HCT116 (cell line): ENCODE measurements at regions of chr6 and their contacts with region 1.

Region 1: DNA sequence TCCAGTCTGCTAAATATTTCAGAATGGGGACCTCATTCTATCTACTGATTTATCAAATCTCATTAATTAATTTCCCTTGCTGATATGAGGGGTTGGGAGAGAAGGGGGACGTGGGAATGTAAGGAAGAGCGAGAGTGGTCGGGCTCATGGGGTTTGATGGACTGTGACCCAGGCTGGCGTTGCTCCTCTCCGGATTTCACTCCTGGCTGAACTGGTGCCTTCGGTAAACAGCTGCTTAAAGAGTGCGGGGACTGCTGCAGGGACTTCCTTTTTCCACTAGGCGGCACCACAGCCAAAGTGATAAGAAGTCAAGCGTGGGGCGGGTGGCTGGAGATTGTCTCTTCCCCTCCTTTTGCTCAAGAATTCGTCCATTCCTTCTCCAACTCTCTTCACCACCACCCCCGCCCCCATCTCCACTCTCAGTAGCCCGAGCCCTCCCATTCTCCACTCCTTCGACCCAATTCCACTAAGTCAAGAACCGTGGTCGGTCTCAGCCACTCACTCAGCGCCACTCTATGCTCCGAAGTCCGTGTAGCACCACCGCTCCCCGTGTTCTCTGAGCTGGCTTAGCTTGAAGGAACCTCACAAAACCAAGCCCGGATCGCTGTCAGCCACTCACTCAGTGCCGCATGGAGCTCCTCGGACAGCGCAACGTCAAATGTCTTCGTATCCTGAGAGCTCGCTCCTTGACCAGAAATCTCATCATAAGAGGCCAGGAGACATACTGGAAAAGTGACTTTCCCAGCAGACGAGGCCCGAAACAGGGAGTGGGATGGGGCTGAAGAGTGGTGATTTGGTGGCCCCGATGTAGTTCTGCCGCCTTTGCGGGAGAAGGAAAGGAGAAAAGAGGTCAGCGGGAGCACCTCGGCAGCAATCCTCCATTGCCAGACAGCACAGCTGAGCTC is 9.7 kb downstream of the TRIM31 start:
- DNase-seq: peak; percentile 74
- ATAC-seq: peak; percentile 59
- H3K4me3 ChIP-seq: peak overlapping the region in 1 of 2 experiments; percentile 56; a peak in 1 of 4 replicates
- H3K27ac ChIP-seq: no peak overlapping the region
- H3K4me1 ChIP-seq: peaks cover 17 to 42% of the 10 kb centered on the region in 2 experiments
- H3K27me3 ChIP-seq: no peaks in the 10 kb centered on the region
- CTCF ChIP-seq: peak; percentile 86 to 96 (median 91)
- POLR2A ChIP-seq: no peak
- RAD21 ChIP-seq: peak; percentile 95

Region 2: DNA sequence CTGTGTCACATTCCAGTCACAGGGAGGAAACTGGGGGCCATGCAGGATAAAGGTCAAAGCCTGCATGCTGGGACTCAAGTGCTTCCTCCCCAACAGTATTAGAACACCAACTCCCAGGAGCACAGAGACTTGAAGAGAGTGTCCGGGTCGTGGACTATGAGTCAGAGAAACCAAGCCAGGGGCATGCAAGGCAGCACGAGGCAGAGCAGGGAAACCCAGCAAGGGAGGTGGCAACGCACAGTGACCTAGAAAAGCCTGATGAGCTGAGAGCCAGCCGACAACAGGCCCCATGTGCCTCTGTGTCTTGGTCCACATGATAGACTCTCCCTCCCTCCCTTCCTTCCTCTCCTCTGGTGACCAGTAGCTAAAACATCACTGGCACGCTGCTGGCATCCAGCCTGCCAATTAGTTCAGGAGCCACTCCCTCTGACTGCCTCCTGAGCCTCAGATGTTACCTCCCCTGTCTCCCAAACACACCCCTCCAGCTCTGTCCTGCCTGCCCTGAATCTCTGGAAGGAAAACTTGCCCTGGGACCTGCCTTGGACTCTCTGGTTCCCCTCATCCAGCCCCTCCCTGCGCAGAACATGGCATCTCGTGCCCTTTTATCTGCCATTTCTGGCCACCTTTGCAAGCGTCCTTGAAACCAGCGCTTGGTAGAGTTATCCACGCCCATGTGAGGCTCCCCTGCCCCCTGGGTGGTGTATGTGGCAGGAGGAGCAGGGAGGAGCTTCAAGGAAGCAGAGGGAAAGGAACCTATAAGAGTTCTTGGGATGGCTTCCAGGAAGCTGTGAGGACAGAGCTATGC is 11.4 kb before region 1 on chr6:
- CTCF ChIA-PET with region 1: interaction called, 8 read pairs
- POLR2A ChIA-PET with region 1: interaction called, 18 read pairs
- RAD21 ChIA-PET with region 1: interaction called in 1 of 2 experiments, 3 read pairs
- intact Hi-C with region 1: no loop called
- DNase-seq: peak; percentile 85
- ATAC-seq: peak; percentile 93
- H3K4me3 ChIP-seq: peak overlapping the region; percentile 15 to 52; a peak in 3 of 4 replicates
- H3K27ac ChIP-seq: peak overlapping the region; percentile 71
- H3K4me1 ChIP-seq: peaks cover 17 to 38% of the 10 kb centered on the region in 2 experiments
- H3K27me3 ChIP-seq: no peaks in the 10 kb centered on the region
- CTCF ChIP-seq: no peak
- POLR2A ChIP-seq: peak; percentile 28
- RAD21 ChIP-seq: no peak

Region 3: DNA sequence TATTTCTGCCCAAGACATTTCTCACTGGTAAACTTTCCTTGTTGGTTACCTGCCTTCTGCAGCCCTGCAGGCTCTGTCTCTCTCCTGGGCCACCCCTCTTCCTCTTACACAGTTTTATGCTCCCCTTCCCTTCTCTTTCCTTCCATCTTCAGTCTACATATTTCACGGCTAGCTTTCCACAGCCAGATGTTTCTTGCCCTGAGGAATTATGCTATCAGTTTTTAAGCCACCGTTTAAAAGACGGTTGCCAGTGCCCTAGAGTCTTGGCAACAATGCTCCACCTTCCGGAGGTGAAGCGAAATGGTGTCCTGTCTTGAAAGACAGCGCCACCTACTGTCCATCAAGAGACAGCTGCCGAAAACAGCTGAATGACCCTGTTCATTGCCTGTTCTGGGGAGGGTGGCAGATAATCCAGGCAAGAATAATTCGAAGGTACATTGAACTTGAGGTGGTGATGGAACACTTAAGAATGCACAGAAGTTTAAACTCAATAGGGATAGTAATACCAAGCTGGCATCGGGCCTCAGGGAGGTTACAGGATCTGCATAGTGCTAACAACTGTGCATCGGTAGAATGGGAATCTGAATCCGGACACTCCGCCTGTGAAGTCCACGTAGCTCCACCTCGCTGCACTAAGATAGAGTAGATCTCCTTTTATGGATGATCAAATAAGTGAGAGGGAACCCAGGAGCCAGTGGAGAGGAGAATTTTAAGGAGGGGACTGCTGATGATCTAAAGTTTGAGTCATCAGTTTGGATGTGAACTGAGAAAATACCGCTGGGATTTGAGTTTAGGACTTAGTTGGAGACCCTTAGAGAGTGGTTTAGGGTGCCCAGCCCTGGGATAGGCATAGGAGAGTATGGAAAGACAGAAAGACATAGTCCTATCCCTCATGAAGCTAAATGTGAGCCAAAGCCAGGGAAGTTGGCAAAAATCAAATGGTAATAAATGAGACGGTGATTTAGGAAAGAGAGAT is 28.0 kb after region 1 on chr6:
- CTCF ChIA-PET with region 1: interaction called, 105 read pairs
- POLR2A ChIA-PET with region 1: interaction called, 4 read pairs
- RAD21 ChIA-PET with region 1: interaction called, 4 to 6 read pairs
- intact Hi-C with region 1: loop called (anchors 1 kb)
- DNase-seq: peak; percentile 76
- ATAC-seq: peak; percentile 98
- H3K4me3 ChIP-seq: peak overlapping the region in 1 of 2 experiments; percentile 17; a peak in 1 of 4 replicates
- H3K27ac ChIP-seq: no peak overlapping the region
- H3K4me1 ChIP-seq: peaks cover 8 to 22% of the 10 kb centered on the region in 2 experiments; a peak in 3 of 4 replicates
- H3K27me3 ChIP-seq: no peaks in the 10 kb centered on the region
- CTCF ChIP-seq: peak; percentile 99 to 100 (median 100)
- POLR2A ChIP-seq: no peak
- RAD21 ChIP-seq: peak; percentile 91

Region 4: GRCh38 chr6:30163090-30163917 is 60.1 kb after region 1 on chr6 and contains the start of gene TRIM15:
- CTCF ChIA-PET with region 1: interaction called, 6 read pairs
- POLR2A ChIA-PET with region 1: no interaction called
- RAD21 ChIA-PET with region 1: no interaction called
- intact Hi-C with region 1: loop called (anchors 2 kb)
- DNase-seq: peak; percentile 73
- ATAC-seq: peak; percentile 92
- H3K4me3 ChIP-seq: peak within 1 kb of the TSS; percentile 52 to 66
- H3K27ac ChIP-seq: peak within 1 kb of the TSS; percentile 49
- H3K4me1 ChIP-seq: peaks cover 9 to 25% of the 10 kb centered on the region in 2 experiments; a peak in 3 of 4 replicates
- H3K27me3 ChIP-seq: no peaks in the 10 kb centered on the region
- CTCF ChIP-seq: no peak
- POLR2A ChIP-seq: no peak
- RAD21 ChIP-seq: no peak
- total RNA-seq, gene TRIM15: 6.5 TPM

Region 5: GRCh38 chr6:30169658-30170614 is 66.7 kb after region 1 on chr6:
- CTCF ChIA-PET with region 1: interaction called, 6 read pairs
- POLR2A ChIA-PET with region 1: interaction called, 4 read pairs
- RAD21 ChIA-PET with region 1: no interaction called
- intact Hi-C with region 1: loop called (anchors 1 kb)
- DNase-seq: peak; percentile 51
- ATAC-seq: peak; percentile 99
- H3K4me3 ChIP-seq: no peak overlapping the region
- H3K27ac ChIP-seq: no peak overlapping the region
- H3K4me1 ChIP-seq: no peaks in the 10 kb centered on the region
- H3K27me3 ChIP-seq: no peaks in the 10 kb centered on the region
- CTCF ChIP-seq: peak; percentile 83 to 89 (median 88)
- POLR2A ChIP-seq: no peak
- RAD21 ChIP-seq: peak; percentile 93

Region 6: DNA sequence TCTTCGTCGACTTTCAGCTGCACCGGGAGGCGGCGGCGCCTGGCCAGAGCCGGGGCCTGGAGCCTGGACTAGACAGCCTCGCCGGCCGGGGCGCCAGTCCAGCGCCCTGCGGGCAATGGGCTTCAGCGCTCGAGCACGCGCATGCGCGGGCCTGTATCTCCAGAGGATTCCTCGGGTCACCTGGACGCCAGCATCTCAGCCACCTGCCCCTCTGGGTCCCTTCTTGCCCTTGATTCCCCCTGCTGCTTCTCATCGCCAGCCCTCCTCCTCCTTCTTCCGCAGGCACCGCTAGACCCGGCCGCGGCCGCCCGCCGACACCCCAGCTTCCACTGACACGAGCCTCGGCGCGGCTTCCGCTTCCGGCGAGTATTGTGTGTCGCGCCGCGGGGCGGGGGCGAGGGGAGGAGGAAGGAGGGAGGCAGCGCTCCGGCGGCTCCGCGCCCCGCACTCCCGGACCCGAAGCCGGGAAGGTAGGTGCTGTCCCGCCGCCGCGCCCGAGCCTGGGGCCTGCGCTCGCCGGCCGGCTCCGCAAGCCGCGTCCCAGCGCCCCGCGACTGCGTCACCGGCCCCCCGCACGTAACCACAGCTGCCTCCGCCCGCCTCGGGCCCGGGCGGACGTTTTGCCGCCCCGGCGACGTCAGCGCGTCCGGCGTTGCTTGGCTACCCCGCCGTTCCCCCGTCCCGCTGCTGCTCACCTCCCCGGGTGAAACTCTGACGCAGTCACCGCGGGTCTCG is 223.5 kb after region 1 on chr6 and contains the start of gene TRIM39:
- CTCF ChIA-PET with region 1: no interaction called
- POLR2A ChIA-PET with region 1: no interaction called
- RAD21 ChIA-PET with region 1: no interaction called
- intact Hi-C with region 1: loop called (anchors 1 kb)
- DNase-seq: peak; percentile 59
- ATAC-seq: peak; percentile 79
- H3K4me3 ChIP-seq: peak within 1 kb of the TSS; percentile 77 to 93
- H3K27ac ChIP-seq: peak within 1 kb of the TSS; percentile 80
- H3K4me1 ChIP-seq: peaks cover 9 to 24% of the 10 kb centered on the region in 2 experiments
- H3K27me3 ChIP-seq: no peaks in the 10 kb centered on the region
- CTCF ChIP-seq: no peak
- POLR2A ChIP-seq: no peak
- RAD21 ChIP-seq: no peak
- total RNA-seq, gene TRIM39: 11.2 TPM

Region 7: DNA sequence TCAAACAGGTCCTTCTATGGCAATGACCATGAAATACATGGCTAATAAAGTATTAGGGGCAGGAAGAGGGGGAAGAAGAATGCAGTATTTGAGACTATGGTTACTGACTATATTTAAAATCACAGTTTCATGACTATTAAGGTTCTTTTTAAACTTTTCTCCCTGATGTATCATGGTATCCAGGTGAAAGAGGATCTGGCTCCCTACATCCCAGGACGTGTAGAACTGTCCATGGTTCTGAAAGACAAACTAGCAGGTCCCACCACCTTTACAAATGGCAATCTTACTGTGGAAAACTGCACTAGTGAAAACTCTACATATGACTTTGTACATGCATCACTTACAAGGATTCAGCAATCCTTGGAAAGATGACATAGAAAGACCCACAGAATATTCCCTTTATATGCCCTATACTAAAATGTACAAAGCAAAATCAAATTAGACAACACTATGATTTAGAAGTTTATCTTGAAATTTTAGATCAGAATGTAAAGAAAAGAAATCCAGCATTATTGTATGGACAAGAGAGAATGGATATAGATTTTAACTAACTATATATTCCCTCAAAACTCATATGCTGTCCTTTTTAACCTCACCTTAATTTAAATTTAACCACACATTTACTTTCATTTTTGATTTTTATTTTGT is 275.2 kb after region 1 on chr6:
- CTCF ChIA-PET with region 1: no interaction called
- POLR2A ChIA-PET with region 1: no interaction called
- RAD21 ChIA-PET with region 1: no interaction called
- intact Hi-C with region 1: no loop called
- DNase-seq: no peak
- ATAC-seq: no peak
- H3K4me3 ChIP-seq: no peak overlapping the region
- H3K27ac ChIP-seq: no peak overlapping the region
- H3K4me1 ChIP-seq: no peaks in the 10 kb centered on the region
- H3K27me3 ChIP-seq: peaks cover 20% of the 10 kb centered on the region
- CTCF ChIP-seq: no peak
- POLR2A ChIP-seq: no peak
- RAD21 ChIP-seq: no peak